Endothelial cell of umbilical vein (primary cell): ENCODE measurements at regions of chr7 and their contacts with region 1.

Region 1: GRCh38 chr7:149090397-149091195 is at the start of gene ZNF786:
- DNase-seq: peak; percentile 87
- H3K4me3 ChIP-seq: peak within 1 kb of the TSS; percentile 76 to 96 (median 89)
- H3K27ac ChIP-seq: peak within 1 kb of the TSS; percentile 32
- H3K4me1 ChIP-seq: peaks cover 6% of the 10 kb centered on the region
- H3K27me3 ChIP-seq: no peaks in the 10 kb centered on the region
- CTCF ChIP-seq: peak; percentile 89 to 96
- POLR2A ChIP-seq: peak; percentile 71
- total RNA-seq, gene ZNF786: 5.4 and 5.9 TPM in 2 replicates

Region 2: GRCh38 chr7:148940702-148941597 is 149.6 kb before region 1 on chr7:
- CTCF ChIA-PET with region 1: no interaction called
- POLR2A ChIA-PET with region 1: no interaction called
- dilution Hi-C with region 1: no loop called
- intact Hi-C with region 1: loop called (anchors 1 kb)
- DNase-seq: peak; percentile 90
- H3K4me3 ChIP-seq: peak overlapping the region; percentile 85 to 98 (median 88)
- H3K27ac ChIP-seq: peak overlapping the region; percentile 91
- H3K4me1 ChIP-seq: peaks cover 13% of the 10 kb centered on the region
- H3K27me3 ChIP-seq: no peaks in the 10 kb centered on the region
- CTCF ChIP-seq: no peak
- POLR2A ChIP-seq: peak; percentile 42

Region 3: GRCh38 chr7:149005241-149006050 is 85.2 kb before region 1 on chr7:
- CTCF ChIA-PET with region 1: interaction called, 11 read pairs
- POLR2A ChIA-PET with region 1: no interaction called
- dilution Hi-C with region 1: no loop called
- intact Hi-C with region 1: loop called (anchors 1 kb)
- DNase-seq: peak; percentile 65
- H3K4me3 ChIP-seq: no peak overlapping the region
- H3K27ac ChIP-seq: no peak overlapping the region
- H3K4me1 ChIP-seq: no peaks in the 10 kb centered on the region
- H3K27me3 ChIP-seq: no peaks in the 10 kb centered on the region
- CTCF ChIP-seq: peak; percentile 66 to 91
- POLR2A ChIP-seq: no peak

Region 4: GRCh38 chr7:149071641-149072437 is 18.8 kb before region 1 on chr7:
- CTCF ChIA-PET with region 1: interaction called, 11 read pairs
- POLR2A ChIA-PET with region 1: no interaction called
- dilution Hi-C with region 1: no loop called
- intact Hi-C with region 1: no loop called
- DNase-seq: no peak
- H3K4me3 ChIP-seq: no peak overlapping the region
- H3K27ac ChIP-seq: no peak overlapping the region
- H3K4me1 ChIP-seq: no peaks in the 10 kb centered on the region
- H3K27me3 ChIP-seq: no peaks in the 10 kb centered on the region
- CTCF ChIP-seq: peak; percentile 23 to 40
- POLR2A ChIP-seq: no peak

Region 5: GRCh38 chr7:149104749-149105148 is 14.2 kb after region 1 on chr7:
- CTCF ChIA-PET with region 1: no interaction called
- POLR2A ChIA-PET with region 1: no interaction called
- dilution Hi-C with region 1: no loop called
- intact Hi-C with region 1: no loop called
- DNase-seq: no peak
- H3K4me3 ChIP-seq: no peak overlapping the region
- H3K27ac ChIP-seq: no peak overlapping the region
- H3K4me1 ChIP-seq: no peaks in the 10 kb centered on the region
- H3K27me3 ChIP-seq: no peaks in the 10 kb centered on the region
- CTCF ChIP-seq: no peak
- POLR2A ChIP-seq: no peak

Region 6: DNA sequence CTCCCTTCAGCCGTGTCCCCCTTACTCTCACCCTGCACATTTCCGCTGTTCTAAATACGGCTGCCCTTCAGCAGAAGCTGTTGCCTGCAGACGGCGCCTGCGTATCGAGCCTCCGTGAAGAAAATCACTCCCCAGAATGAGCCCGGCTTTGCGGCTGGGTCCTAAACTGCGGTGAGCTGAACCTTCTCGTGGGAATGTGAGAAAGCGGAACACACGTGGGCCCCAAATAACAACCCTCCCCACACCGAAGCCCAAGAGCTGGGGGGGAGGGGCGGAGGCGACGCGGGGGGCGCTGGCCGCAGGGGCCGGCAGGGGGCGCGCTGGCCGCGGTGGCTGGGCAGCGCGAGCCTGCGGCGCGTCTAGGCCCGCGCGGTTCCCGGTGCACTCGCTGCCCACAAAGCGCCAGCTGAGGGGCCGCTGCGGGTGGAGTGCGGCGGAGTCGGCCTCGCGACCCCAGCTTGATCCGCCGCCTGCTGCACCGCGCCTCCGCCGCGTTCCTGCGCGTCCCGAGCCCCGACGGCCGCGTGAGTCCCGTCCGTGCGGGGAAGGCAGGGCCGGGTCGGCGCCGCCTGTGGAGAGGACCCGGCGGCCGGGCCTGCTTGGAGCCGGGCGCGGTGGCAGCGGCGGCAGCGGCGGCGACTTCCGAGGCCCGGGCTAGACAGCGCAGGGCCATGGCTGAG is 56.6 kb after region 1 on chr7 and contains the start of gene ZNF398:
- CTCF ChIA-PET with region 1: no interaction called
- POLR2A ChIA-PET with region 1: no interaction called
- dilution Hi-C with region 1: no loop called
- intact Hi-C with region 1: loop called (anchors 1 kb)
- DNase-seq: peak; percentile 75
- H3K4me3 ChIP-seq: peak within 1 kb of the TSS; percentile 74 to 98 (median 87)
- H3K27ac ChIP-seq: peak within 1 kb of the TSS; percentile 57
- H3K4me1 ChIP-seq: peaks cover 4% of the 10 kb centered on the region
- H3K27me3 ChIP-seq: no peaks in the 10 kb centered on the region
- CTCF ChIP-seq: peak; percentile 42 to 79
- POLR2A ChIP-seq: peak; percentile 63
- total RNA-seq, gene ZNF398: 8.6 and 10.6 TPM in 2 replicates